Mucosa of descending colon (tissue), 3 donors: ENCODE measurements at regions of chr17 and their contacts with region 1.

Region 1: GRCh38 chr17:28967221-28968140 is 16.2 kb upstream of the PHF12 start:
- DNase-seq: peak in 1 of 3 donors; percentile 19
- ATAC-seq: peak; percentile 27
- H3K4me3 ChIP-seq: no peak overlapping the region
- H3K4me1 ChIP-seq: no peaks in the 10 kb centered on the region
- CTCF ChIP-seq: no peak

Region 2: GRCh38 chr17:29111816-29112499 is 144.5 kb after region 1 on chr17:
- intact Hi-C with region 1: loop called (anchors 5 kb)
- DNase-seq: peak in 2 of 3 donors; percentile 76 to 82
- ATAC-seq: peak; percentile 79
- H3K4me3 ChIP-seq: no peak overlapping the region
- H3K4me1 ChIP-seq: no peaks in the 10 kb centered on the region
- CTCF ChIP-seq: peak; percentile 86

Region 3: GRCh38 chr17:29116804-29117772 is 149.6 kb after region 1 on chr17:
- intact Hi-C with region 1: loop called (anchors 5 kb)
- DNase-seq: peak; percentile 79 to 80 (median 80)
- ATAC-seq: peak; percentile 82
- H3K4me3 ChIP-seq: no peak overlapping the region
- H3K4me1 ChIP-seq: no peaks in the 10 kb centered on the region
- CTCF ChIP-seq: peak; percentile 89